Left cardiac atrium (tissue), 4 donors: ENCODE measurements at regions of chr3 and their contacts with region 1.

Region 1: GRCh38 chr3:148955544-148956346 is 35.6 kb upstream of the GYG1 start:
- DNase-seq: peak; percentile 43
- ATAC-seq: peak; percentile 90 to 91

Region 2: GRCh38 chr3:149020196-149020838 is 64.6 kb after region 1 on chr3:
- intact Hi-C with region 1: loop called in 1 of 2 experiments (anchors 5 kb)
- DNase-seq: no peak
- ATAC-seq: peak; percentile 42 to 54

Region 3: DNA sequence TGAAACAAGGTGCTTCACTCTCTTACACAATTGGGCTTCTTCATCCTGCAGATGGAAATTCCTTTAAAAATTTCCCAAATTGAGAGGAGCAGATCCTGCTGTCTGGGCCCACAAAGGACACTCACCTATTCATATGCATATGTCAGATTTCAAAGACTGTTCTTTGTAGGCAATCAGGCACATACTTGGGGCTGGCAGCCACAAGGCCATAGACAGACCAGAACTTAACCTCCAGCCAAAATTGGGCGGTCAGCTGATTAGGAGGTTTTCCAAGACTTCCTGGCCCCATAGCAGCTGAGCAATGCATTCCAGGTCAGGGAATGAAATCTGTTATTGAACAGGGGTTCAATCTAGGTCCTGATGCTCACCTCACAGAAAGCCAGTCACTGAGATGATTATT is 158.7 kb after region 1 on chr3:
- intact Hi-C with region 1: loop called (anchors 5 to 10 kb)
- DNase-seq: no peak
- ATAC-seq: peak in 1 of 2 donors; percentile 55

Region 4: GRCh38 chr3:149273096-149273751 is 317.5 kb after region 1 on chr3:
- intact Hi-C with region 1: loop called (anchors 2 to 5 kb)
- DNase-seq: no peak
- ATAC-seq: peak; percentile 86